ENCODE measurements at regions of chr9 and their contacts with region 1.

Region 1: DNA sequence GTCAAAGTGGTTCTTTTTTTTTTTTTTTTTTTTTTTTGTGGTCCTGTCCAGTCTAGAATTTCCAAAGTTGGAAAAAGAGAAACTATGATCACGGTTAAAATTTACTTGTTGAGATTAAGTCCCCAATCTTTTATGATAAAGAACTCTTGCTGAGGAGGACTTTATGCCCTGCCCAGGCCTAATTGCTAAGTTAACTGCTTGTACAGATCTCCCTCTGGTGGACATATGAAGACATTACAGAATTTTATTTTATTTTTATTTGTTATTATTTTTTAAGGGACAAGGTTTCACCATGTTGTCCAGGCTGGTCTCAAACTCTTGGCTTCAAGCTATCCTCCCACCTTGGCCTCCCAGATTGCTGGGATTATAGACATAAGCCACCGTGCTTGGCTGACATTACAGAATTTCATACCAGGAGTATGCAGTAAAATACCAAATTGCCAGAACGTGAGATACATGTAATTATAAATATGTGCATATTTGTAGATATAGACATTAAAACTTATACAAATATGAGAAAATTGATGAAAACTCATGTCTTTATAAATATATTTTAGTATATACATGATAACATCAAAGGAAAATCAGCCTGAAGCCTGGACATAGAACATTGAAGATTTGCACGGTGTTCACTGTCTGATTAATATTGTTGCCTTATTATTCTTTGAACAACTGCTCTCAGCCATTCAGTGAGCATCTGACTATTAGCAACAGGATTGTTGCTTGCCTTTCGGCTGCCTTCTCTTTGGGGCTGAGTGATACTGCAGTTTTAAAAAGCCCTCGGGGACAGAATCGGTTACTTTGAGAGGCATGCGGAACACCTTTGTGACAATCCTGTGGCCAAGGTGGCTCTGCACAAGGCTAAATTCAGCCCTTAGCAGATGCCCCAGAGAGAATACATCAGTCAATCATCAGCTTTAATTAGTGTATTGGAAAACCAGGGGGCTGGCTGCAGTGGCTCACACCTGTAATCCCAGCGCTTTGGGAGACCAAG is 91.0 kb downstream of the RFK start:
- DNase-seq: peak in 3 of 9 experiments; percentile 8 to 62 (median 46)
- ATAC-seq: peak; percentile 58
- H3K4me3 ChIP-seq: no peak overlapping the region
- H3K4me3 Mint-ChIP-seq: no peak overlapping the region
- H3K27ac ChIP-seq: no peak overlapping the region
- H3K27ac Mint-ChIP-seq: no peak overlapping the region
- H3K4me1 ChIP-seq: no peaks in the 10 kb centered on the region
- H3K4me1 Mint-ChIP-seq: no peaks in the 10 kb centered on the region
- H3K27me3 ChIP-seq: no peaks in the 10 kb centered on the region
- H3K27me3 Mint-ChIP-seq: peaks cover 8% of the 10 kb centered on the region
- CTCF ChIP-seq: peak; percentile 73

Region 2: DNA sequence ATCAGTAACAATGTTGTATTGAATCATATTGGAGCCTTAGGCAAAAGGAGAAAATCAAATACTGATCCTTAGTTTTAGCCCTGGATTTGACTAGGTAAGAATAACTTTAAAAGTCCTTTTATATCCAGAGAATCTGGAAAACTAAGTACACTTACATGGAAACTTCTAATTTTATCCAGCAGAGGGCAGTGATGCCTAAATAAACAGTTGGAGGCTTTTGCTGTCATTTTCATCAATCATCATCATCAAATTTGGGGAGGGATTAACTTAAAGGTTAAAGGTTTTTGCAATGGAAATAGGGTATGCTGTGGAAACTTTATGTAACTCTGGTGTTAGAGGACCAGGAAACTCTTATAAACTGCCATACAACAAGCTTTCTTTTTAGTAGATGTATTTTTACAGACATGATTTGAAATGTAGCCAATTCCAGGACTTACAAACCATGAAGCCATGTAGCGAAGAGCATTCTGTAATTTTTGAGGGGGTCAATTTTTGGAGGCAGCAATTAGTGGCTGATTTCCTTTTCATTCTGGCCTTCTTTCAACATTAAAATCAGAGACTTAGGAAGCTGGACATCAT is 1102.3 kb before region 1 on chr9:
- CTCF ChIA-PET with region 1: interaction called, 3 read pairs
- POLR2A ChIA-PET with region 1: interaction called, 3 read pairs
- intact Hi-C with region 1: loop called (anchors 2 kb)
- DNase-seq: peak in 2 of 9 experiments; percentile 54 to 62
- ATAC-seq: no peak
- H3K4me3 ChIP-seq: no peak overlapping the region
- H3K4me3 Mint-ChIP-seq: no peak overlapping the region
- H3K27ac ChIP-seq: no peak overlapping the region
- H3K27ac Mint-ChIP-seq: no peak overlapping the region
- H3K4me1 ChIP-seq: no peaks in the 10 kb centered on the region
- H3K4me1 Mint-ChIP-seq: no peaks in the 10 kb centered on the region
- H3K27me3 ChIP-seq: no peaks in the 10 kb centered on the region
- H3K27me3 Mint-ChIP-seq: no peaks in the 10 kb centered on the region
- CTCF ChIP-seq: peak; percentile 65

Region 3: DNA sequence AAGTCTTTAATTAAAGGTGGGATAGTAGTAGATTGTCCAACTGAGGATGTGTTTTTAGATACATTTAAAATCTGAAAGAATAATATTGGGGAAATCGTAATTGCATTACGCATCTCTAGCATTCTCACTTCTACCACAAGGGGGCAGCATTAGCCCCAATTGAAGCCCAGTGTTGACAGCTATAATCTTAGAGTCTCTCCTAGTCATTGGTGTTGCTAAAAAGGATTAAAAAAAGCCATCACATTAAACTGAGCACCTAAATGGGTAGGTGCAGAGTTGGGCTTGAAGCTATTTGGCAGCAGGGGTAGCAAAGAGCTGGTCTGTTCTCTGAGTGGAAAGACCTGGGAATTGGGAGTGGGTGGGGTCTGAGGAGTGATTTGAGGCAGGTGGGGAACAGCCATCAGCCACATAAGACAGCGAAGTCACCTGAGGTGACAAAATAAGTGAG is 1037.7 kb before region 1 on chr9:
- CTCF ChIA-PET with region 1: interaction called, 25 read pairs
- POLR2A ChIA-PET with region 1: no interaction called
- intact Hi-C with region 1: loop called (anchors 2 kb)
- DNase-seq: peak in 7 of 9 experiments; percentile 19 to 61 (median 42)
- ATAC-seq: peak; percentile 58
- H3K4me3 ChIP-seq: no peak overlapping the region
- H3K4me3 Mint-ChIP-seq: no peak overlapping the region
- H3K27ac ChIP-seq: no peak overlapping the region
- H3K27ac Mint-ChIP-seq: no peak overlapping the region
- H3K4me1 ChIP-seq: no peaks in the 10 kb centered on the region
- H3K4me1 Mint-ChIP-seq: no peaks in the 10 kb centered on the region
- H3K27me3 ChIP-seq: no peaks in the 10 kb centered on the region
- H3K27me3 Mint-ChIP-seq: no peaks in the 10 kb centered on the region
- CTCF ChIP-seq: peak; percentile 96

Region 4: DNA sequence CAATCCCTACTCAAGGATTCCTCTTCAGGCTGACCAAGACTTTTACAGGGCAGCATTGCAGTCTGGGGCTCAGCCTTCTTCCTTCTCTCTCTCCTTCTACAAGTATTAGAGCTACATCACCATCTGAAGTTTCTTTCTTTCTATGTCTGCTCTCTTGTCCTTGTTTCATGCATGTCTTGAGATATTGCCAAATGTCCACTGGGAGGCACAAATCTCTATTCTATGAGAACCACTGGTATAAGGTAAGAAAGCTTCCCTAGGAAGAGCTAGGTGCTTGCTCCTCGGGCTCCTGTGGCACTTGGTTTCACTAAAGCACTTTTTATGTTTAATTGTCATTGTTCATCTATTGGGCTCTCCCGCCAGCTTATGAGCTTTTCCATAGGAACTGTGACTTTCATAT is 702.0 kb before region 1 on chr9:
- CTCF ChIA-PET with region 1: interaction called, 4 read pairs
- POLR2A ChIA-PET with region 1: no interaction called
- intact Hi-C with region 1: loop called in 1 of 2 experiments (anchors 10 kb)
- DNase-seq: no peak
- ATAC-seq: no peak
- H3K4me3 ChIP-seq: no peak overlapping the region
- H3K4me3 Mint-ChIP-seq: no peak overlapping the region
- H3K27ac ChIP-seq: no peak overlapping the region
- H3K27ac Mint-ChIP-seq: no peak overlapping the region
- H3K4me1 ChIP-seq: no peaks in the 10 kb centered on the region
- H3K4me1 Mint-ChIP-seq: no peaks in the 10 kb centered on the region
- H3K27me3 ChIP-seq: no peaks in the 10 kb centered on the region
- H3K27me3 Mint-ChIP-seq: peaks cover 2% of the 10 kb centered on the region
- CTCF ChIP-seq: no peak

Region 5: GRCh38 chr9:76004526-76004925 is 298.7 kb before region 1 on chr9:
- CTCF ChIA-PET with region 1: no interaction called
- POLR2A ChIA-PET with region 1: interaction called, 3 read pairs
- intact Hi-C with region 1: loop called (anchors 2 to 10 kb)
- DNase-seq: no peak
- ATAC-seq: no peak
- H3K4me3 ChIP-seq: no peak overlapping the region
- H3K4me3 Mint-ChIP-seq: no peak overlapping the region
- H3K27ac ChIP-seq: no peak overlapping the region
- H3K27ac Mint-ChIP-seq: no peak overlapping the region
- H3K4me1 ChIP-seq: peaks cover 31% of the 10 kb centered on the region
- H3K4me1 Mint-ChIP-seq: peaks cover 67% of the 10 kb centered on the region
- H3K27me3 ChIP-seq: no peaks in the 10 kb centered on the region
- H3K27me3 Mint-ChIP-seq: no peaks in the 10 kb centered on the region
- CTCF ChIP-seq: no peak

Region 6: GRCh38 chr9:76292246-76292645 is 11.0 kb before region 1 on chr9:
- CTCF ChIA-PET with region 1: interaction called, 48 read pairs
- POLR2A ChIA-PET with region 1: no interaction called
- intact Hi-C with region 1: no loop called
- DNase-seq: no peak
- ATAC-seq: no peak
- H3K4me3 ChIP-seq: no peak overlapping the region
- H3K4me3 Mint-ChIP-seq: no peak overlapping the region
- H3K27ac ChIP-seq: no peak overlapping the region
- H3K27ac Mint-ChIP-seq: no peak overlapping the region
- H3K4me1 ChIP-seq: no peaks in the 10 kb centered on the region
- H3K4me1 Mint-ChIP-seq: no peaks in the 10 kb centered on the region
- H3K27me3 ChIP-seq: no peaks in the 10 kb centered on the region
- H3K27me3 Mint-ChIP-seq: no peaks in the 10 kb centered on the region
- CTCF ChIP-seq: no peak